ENCODE measurements at regions of chr7 and their contacts with region 1.

Region 1: DNA sequence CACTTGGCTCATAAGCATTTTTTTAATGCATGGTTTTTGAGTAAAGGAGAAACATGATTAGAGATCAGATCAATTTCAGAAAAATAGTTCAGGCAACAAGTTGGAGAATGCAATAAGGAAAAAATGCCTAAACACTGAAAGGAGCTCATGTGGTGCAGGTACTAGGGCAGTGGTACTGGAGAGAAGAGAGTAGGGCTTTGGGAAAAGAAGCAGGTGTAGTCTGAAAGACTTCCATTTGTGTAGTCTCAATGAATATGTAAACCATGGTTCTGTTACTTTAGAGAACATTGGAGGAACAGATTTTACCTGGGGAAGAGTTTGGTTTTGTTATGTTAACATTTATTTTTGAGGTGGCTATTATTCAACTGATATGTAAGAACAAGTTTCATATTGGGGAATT is 5.5 kb downstream of the GTPBP10 start:
- DNase-seq: no peak
- H3K4me3 ChIP-seq: no peak overlapping the region
- H3K27ac ChIP-seq: no peak overlapping the region
- H3K4me1 ChIP-seq: peaks cover 9 to 17% of the 10 kb centered on the region in 2 donors
- H3K27me3 ChIP-seq: no peaks in the 10 kb centered on the region
- CTCF ChIP-seq: no peak
- POLR2A ChIP-seq: no peak

Region 2: GRCh38 chr7:90070227-90070626 is 281.8 kb before region 1 on chr7:
- intact Hi-C with region 1: no loop called
- DNase-seq: no peak
- H3K4me3 ChIP-seq: no peak overlapping the region
- H3K27ac ChIP-seq: no peak overlapping the region
- H3K4me1 ChIP-seq: no peaks in the 10 kb centered on the region
- H3K27me3 ChIP-seq: no peaks in the 10 kb centered on the region
- CTCF ChIP-seq: no peak
- POLR2A ChIP-seq: no peak

Region 3: GRCh38 chr7:90290244-90291113 is 61.5 kb before region 1 on chr7:
- intact Hi-C with region 1: no loop called
- DNase-seq: no peak
- H3K4me3 ChIP-seq: no peak overlapping the region
- H3K27ac ChIP-seq: no peak overlapping the region
- H3K4me1 ChIP-seq: no peaks in the 10 kb centered on the region
- H3K27me3 ChIP-seq: no peaks in the 10 kb centered on the region
- CTCF ChIP-seq: no peak
- POLR2A ChIP-seq: no peak

Region 4: GRCh38 chr7:90396420-90396819 is 44.4 kb after region 1 on chr7:
- intact Hi-C with region 1: loop called (anchors 5 kb)
- DNase-seq: no peak
- H3K4me3 ChIP-seq: no peak overlapping the region
- H3K27ac ChIP-seq: no peak overlapping the region
- H3K4me1 ChIP-seq: no peaks in the 10 kb centered on the region
- H3K27me3 ChIP-seq: no peaks in the 10 kb centered on the region
- CTCF ChIP-seq: no peak
- POLR2A ChIP-seq: no peak

Measured in thyroid gland (tissue), 4 donors.